ENCODE measurements at regions of chr2 and their contacts with region 1.

Region 1: GRCh38 chr2:73839652-73840411 is 11.1 kb downstream of the STAMBP start:
- DNase-seq: no peak
- H3K4me3 ChIP-seq: no peak overlapping the region
- H3K27ac ChIP-seq: no peak overlapping the region
- H3K4me1 ChIP-seq: no peaks in the 10 kb centered on the region
- H3K27me3 ChIP-seq: no peaks in the 10 kb centered on the region
- CTCF ChIP-seq: no peak

Region 2: DNA sequence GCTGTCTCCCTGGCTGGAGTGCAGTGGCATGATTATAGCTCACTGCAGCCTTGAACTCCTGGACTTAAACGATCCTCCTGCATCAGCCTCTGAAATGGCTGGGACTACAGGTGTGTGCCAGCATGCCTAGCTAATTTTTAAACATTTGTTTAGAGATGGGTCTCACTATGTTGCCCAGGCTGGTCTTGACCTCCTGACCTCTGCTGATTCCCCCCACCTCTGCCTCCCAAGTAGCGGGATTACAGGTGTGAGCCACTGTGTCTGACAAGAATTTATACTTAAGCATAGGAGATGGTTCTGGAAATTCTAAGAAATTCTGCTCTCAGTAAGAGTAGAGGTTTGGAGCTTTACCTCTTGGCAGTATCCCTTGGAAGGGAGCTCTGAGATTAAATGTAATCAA is 376.8 kb after region 1 on chr2:
- CTCF ChIA-PET with region 1: no interaction called
- POLR2A ChIA-PET with region 1: interaction called, 18 read pairs
- intact Hi-C with region 1: no loop called
- DNase-seq: no peak
- H3K4me3 ChIP-seq: no peak overlapping the region
- H3K27ac ChIP-seq: no peak overlapping the region
- H3K4me1 ChIP-seq: no peaks in the 10 kb centered on the region
- H3K27me3 ChIP-seq: no peaks in the 10 kb centered on the region
- CTCF ChIP-seq: no peak